PC-9 (cell line): ENCODE measurements at regions of chr9 and their contacts with region 1.

Region 1: DNA sequence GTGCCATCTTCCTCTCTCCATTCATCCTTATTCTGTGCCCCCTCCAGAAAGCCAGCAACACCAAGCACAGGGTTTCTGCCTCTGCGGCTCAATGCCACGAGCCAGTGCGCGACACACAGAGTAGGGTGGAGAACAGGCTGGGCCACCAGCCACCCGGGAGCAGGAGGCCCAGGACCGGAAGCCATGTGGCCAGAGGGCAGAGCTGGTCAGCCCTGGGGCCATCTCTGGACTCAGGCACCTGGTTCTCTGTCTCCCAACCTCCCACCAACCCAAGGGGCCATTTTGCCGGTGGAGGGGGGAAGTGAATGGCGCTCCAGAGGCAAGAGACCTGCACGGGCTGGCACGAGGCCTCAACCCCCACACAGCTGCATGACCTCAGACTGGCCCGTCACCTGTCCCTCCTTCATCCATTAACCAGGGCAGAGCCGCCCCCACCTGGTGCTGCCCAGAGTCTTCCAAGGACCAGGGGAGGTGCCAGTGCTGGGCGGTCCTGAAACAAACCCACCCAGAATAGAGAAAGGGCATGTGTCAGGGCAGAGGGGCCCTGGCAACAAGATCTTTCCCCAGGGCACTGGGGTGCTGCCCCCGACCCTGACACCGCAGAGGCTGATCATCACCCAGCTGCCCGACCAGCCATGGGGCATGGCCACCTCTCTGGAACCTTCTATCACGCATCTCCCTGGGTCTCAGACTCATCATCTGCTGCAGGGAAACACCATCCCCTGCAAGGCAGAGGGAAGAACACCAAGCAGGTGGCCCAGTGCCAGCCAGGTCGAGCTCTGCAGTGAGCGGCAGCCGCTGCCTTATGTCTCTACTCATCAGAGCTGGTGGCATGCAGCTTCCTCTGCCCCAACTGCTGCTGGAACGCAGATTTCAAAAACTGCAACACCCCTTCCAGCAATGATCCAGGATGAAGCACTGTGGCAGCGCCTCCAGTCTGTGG is 11.9 kb downstream of the VAV2 start:
- DNase-seq: peak in 1 of 2 experiments; percentile 37
- H3K4me3 ChIP-seq: no peak overlapping the region
- H3K27ac ChIP-seq: no peak overlapping the region
- H3K4me1 ChIP-seq: no peaks in the 10 kb centered on the region
- H3K27me3 ChIP-seq: no peaks in the 10 kb centered on the region
- CTCF ChIP-seq: no peak

Region 2: DNA sequence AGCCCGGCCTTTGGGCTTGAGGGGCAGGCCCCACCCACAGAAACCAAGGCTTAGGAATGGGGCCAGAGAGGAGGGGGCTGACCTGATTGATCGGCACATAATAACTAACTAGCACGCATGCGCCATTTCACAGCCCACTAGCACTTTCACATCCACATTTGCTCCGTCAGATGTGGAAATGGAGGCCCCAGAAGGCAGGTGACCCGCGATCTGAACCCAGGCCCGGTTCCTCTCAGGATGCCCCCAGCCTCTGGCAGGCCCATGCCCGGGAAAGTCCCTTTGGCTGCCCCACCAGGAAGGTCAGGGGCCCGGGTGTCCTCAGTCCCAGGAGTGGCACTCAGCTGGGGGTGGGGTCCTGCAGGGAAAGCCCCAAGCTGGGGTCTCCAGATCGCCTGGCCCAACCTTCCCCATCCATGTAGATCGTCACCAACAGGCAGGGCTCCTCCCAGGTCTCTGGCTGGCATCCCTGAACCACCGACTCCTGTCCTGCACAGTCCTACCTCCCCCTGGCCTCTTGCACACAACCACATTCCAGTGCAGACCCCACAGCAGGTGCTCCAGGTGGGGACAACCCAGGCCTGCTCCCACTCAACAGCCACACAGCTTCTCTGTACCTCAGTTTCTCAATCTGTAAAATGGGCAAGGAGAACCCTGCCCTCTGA is 34.7 kb before region 1 on chr9:
- CTCF ChIA-PET with region 1: interaction called, 4 read pairs
- POLR2A ChIA-PET with region 1: interaction called, 49 read pairs
- intact Hi-C with region 1: no loop called
- DNase-seq: no peak
- H3K4me3 ChIP-seq: no peak overlapping the region
- H3K27ac ChIP-seq: no peak overlapping the region
- H3K4me1 ChIP-seq: no peaks in the 10 kb centered on the region
- H3K27me3 ChIP-seq: no peaks in the 10 kb centered on the region
- CTCF ChIP-seq: no peak